ENCODE measurements at regions of chr1 and their contacts with region 1.

Region 1: DNA sequence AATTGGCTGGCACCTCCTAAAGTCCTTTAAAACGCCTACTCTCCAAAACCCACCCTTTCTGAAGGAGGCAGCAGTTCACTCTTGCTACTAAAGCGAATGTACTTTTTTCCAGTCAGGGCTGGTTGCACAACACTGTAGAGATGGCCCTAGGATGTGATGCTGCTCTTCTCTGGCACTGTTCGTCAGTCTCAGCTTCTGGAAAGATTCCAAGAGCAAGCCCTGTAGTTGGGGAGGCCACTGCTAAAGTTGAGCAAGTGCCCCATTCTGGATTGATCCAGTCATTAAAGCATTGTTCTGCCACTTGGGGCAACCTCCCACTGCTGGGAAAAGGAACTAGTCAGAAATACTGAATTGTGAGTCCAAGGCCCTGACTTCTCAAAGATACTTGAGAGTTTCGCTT is 28.5 kb upstream of the KCNQ4 start:
- DNase-seq: no peak
- ATAC-seq: no peak
- H3K4me3 Mint-ChIP-seq: no peak overlapping the region
- H3K27ac Mint-ChIP-seq: no peak overlapping the region
- H3K4me1 Mint-ChIP-seq: peaks cover 27% of the 10 kb centered on the region
- H3K27me3 Mint-ChIP-seq: no peaks in the 10 kb centered on the region

Region 2: GRCh38 chr1:40630488-40631381 is 124.3 kb before region 1 on chr1:
- CTCF ChIA-PET with region 1: no interaction called
- POLR2A ChIA-PET with region 1: no interaction called
- intact Hi-C with region 1: loop called in 1 of 2 experiments (anchors 2 kb)
- DNase-seq: peak; percentile 61
- ATAC-seq: no peak
- H3K4me3 Mint-ChIP-seq: no peak overlapping the region
- H3K27ac Mint-ChIP-seq: no peak overlapping the region
- H3K4me1 Mint-ChIP-seq: peaks cover 25% of the 10 kb centered on the region
- H3K27me3 Mint-ChIP-seq: no peaks in the 10 kb centered on the region

Region 3: GRCh38 chr1:40742363-40743061 is 12.6 kb before region 1 on chr1:
- CTCF ChIA-PET with region 1: interaction called, 7 read pairs
- POLR2A ChIA-PET with region 1: interaction called, 3 read pairs
- intact Hi-C with region 1: loop called in 1 of 2 experiments (anchors 1 kb)
- DNase-seq: peak; percentile 60
- ATAC-seq: peak; percentile 93
- H3K4me3 Mint-ChIP-seq: no peak overlapping the region
- H3K27ac Mint-ChIP-seq: peak overlapping the region; percentile 87
- H3K4me1 Mint-ChIP-seq: peaks cover 62% of the 10 kb centered on the region
- H3K27me3 Mint-ChIP-seq: no peaks in the 10 kb centered on the region